ENCODE measurements at regions of chr16 and their contacts with region 1.

Region 1: GRCh38 chr16:66275775-66276428 is 90.6 kb upstream of the CDH5 start:
- DNase-seq: peak; percentile 78
- H3K4me3 Mint-ChIP-seq: no peak overlapping the region
- H3K27ac Mint-ChIP-seq: no peak overlapping the region
- H3K4me1 Mint-ChIP-seq: peaks cover 29% of the 10 kb centered on the region
- H3K27me3 Mint-ChIP-seq: peaks cover 16% of the 10 kb centered on the region
- CTCF ChIP-seq: peak; percentile 76

Region 2: GRCh38 chr16:66224186-66224585 is 51.7 kb before region 1 on chr16:
- CTCF ChIA-PET with region 1: no interaction called
- POLR2A ChIA-PET with region 1: no interaction called
- intact Hi-C with region 1: no loop called
- DNase-seq: no peak
- H3K4me3 Mint-ChIP-seq: no peak overlapping the region
- H3K27ac Mint-ChIP-seq: no peak overlapping the region
- H3K4me1 Mint-ChIP-seq: no peaks in the 10 kb centered on the region
- H3K27me3 Mint-ChIP-seq: no peaks in the 10 kb centered on the region
- CTCF ChIP-seq: no peak

Region 3: GRCh38 chr16:66304151-66304550 is 28.2 kb after region 1 on chr16:
- CTCF ChIA-PET with region 1: interaction called, 32 read pairs
- POLR2A ChIA-PET with region 1: interaction called, 3 read pairs
- intact Hi-C with region 1: no loop called
- DNase-seq: no peak
- H3K4me3 Mint-ChIP-seq: no peak overlapping the region
- H3K27ac Mint-ChIP-seq: no peak overlapping the region
- H3K4me1 Mint-ChIP-seq: no peaks in the 10 kb centered on the region
- H3K27me3 Mint-ChIP-seq: peaks cover 33% of the 10 kb centered on the region
- CTCF ChIP-seq: no peak

Measured in MCF 10A (cell line).